ENCODE measurements at regions of chr10 and their contacts with region 1.

Region 1: GRCh38 chr10:70558871-70559810 is 43.4 kb downstream of the PRF1 start:
- DNase-seq: peak; percentile 88
- ATAC-seq: peak; percentile 96
- H3K4me3 Mint-ChIP-seq: peak overlapping the region; percentile 69
- H3K27ac Mint-ChIP-seq: peak overlapping the region; percentile 89
- H3K4me1 Mint-ChIP-seq: peaks cover 56% of the 10 kb centered on the region
- H3K27me3 Mint-ChIP-seq: no peaks in the 10 kb centered on the region

Region 2: DNA sequence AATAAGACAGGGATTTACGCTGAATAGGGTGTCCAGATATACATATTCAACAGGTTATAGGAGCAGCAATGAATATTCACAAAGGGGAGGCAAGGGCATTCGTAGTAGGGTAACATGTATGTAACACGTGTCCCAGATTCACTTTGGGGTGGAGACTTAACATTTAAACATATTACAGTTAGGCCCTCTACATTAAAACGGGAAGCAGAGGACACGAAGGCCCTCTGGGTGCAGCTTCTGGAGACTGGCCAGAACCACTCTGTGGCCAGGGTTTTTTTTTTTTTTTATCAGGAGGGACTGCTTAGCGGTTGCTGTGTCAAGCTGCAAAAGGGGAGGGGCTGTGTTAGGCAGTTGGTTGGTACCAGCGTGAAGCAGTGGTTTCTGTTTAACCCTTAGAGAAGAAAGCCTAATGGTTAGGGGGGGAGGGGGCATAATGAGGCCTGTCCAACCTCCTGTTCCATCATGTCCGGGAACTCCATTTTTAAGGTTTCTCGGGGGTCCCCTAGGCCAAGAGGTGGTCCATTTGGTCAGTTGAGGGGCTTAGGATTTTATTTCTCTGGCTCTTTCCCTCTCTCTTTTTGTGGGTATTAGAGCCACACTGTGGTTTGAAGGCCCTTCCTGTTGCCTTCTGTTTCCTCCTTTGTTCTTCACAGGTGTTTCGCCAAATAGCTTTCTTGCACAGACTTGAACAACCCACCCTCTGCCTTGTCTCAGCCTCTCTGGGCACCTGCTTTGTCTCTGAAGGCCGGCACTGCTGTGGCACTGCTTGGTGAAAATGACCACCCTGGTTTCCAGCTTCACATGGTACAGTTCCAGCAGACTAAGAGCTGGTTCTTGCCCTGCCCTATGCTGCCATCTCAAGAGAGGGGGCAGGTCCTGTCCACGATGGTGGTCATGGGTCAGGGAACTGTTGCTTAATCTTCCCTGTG is 17.0 kb after region 1 on chr10:
- CTCF ChIA-PET with region 1: interaction called, 63 read pairs
- POLR2A ChIA-PET with region 1: interaction called, 5 read pairs
- DNase-seq: peak; percentile 70
- ATAC-seq: peak; percentile 4
- H3K4me3 Mint-ChIP-seq: peak overlapping the region; percentile 39
- H3K27ac Mint-ChIP-seq: peak overlapping the region; percentile 78
- H3K4me1 Mint-ChIP-seq: peaks cover 78% of the 10 kb centered on the region
- H3K27me3 Mint-ChIP-seq: no peaks in the 10 kb centered on the region

Region 3: DNA sequence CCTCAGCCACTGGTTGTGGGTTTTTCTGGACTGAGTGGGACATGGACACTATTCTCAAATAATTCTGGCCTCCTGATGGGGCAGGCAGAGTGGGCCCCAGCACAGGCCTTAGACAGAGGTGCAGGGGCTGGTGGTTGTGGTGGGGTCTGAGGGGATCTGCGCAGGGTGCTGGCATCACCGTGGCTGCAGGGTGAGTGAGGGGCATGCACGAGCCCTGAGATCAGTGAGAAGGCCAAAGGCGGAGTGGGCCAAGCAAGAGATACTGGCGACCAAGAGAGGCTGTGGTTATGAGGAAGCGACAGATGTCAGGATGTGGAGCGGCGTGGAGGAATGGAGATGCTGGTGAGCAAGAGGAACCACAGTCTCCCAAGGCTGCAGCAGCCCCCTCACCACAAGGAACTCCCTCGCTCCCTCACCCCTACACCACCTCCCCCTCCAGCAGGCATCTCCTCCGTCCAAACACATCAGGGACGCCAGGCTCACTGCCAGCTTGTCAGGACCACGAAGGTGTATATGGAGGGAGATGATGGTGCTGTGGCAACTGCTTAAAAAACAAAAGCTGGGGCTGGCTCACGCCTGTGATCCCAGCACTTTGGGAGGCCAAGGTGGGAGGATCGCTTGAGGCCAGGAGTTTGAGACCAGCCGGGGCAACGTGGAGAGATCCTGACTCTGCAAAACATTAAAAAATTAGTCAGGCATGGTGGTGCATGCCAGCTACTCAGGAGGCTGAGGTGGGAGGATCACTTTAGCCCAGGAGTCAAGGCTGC is 33.8 kb after region 1 on chr10:
- CTCF ChIA-PET with region 1: interaction called, 22 read pairs
- POLR2A ChIA-PET with region 1: interaction called, 11 read pairs
- DNase-seq: no peak
- ATAC-seq: peak; percentile 13
- H3K4me3 Mint-ChIP-seq: no peak overlapping the region
- H3K27ac Mint-ChIP-seq: peak overlapping the region; percentile 21
- H3K4me1 Mint-ChIP-seq: peaks cover 81% of the 10 kb centered on the region
- H3K27me3 Mint-ChIP-seq: peaks cover 5% of the 10 kb centered on the region

Region 4: GRCh38 chr10:70619271-70620019 is 60.3 kb after region 1 on chr10:
- CTCF ChIA-PET with region 1: interaction called, 18 read pairs
- POLR2A ChIA-PET with region 1: no interaction called
- DNase-seq: no peak
- ATAC-seq: no peak
- H3K4me3 Mint-ChIP-seq: no peak overlapping the region
- H3K27ac Mint-ChIP-seq: no peak overlapping the region
- H3K4me1 Mint-ChIP-seq: peaks cover 46% of the 10 kb centered on the region
- H3K27me3 Mint-ChIP-seq: no peaks in the 10 kb centered on the region

Region 5: GRCh38 chr10:70758757-70759514 is 199.8 kb after region 1 on chr10:
- CTCF ChIA-PET with region 1: interaction called, 60 read pairs
- POLR2A ChIA-PET with region 1: no interaction called
- DNase-seq: peak; percentile 82
- ATAC-seq: peak; percentile 70
- H3K4me3 Mint-ChIP-seq: no peak overlapping the region
- H3K27ac Mint-ChIP-seq: peak overlapping the region; percentile 2
- H3K4me1 Mint-ChIP-seq: peaks cover 17% of the 10 kb centered on the region
- H3K27me3 Mint-ChIP-seq: peaks cover 3% of the 10 kb centered on the region

Measured in activated CD8-positive, alpha-beta T cell treated with anti-CD3 and anti-CD28 coated beads, Interleukin-2, amount 10 ng/mL, durations not matched to agents 7 days and 5 days (primary cell).